Caki2 (cell line): ENCODE measurements at regions of chr15 and their contacts with region 1.

Region 1: GRCh38 chr15:49145651-49146609 is 9.5 kb downstream of the COPS2 start:
- DNase-seq: peak; percentile 25

Region 2: GRCh38 chr15:48810414-48811317 is 335.3 kb before region 1 on chr15 and contains the start of gene CEP152:
- in situ Hi-C with region 1: no loop called
- DNase-seq: peak; percentile 98
- total RNA-seq, gene CEP152: 2.2 and 5.2 TPM in 2 replicates

Region 3: GRCh38 chr15:48877630-48878595 is 268.0 kb before region 1 on chr15 and contains the start of gene EID1:
- in situ Hi-C with region 1: loop called (anchors 25 kb)
- DNase-seq: peak; percentile 91
- total RNA-seq, gene EID1: 165 and 200 TPM in 2 replicates

Region 4: GRCh38 chr15:49046220-49047102 is 99.5 kb before region 1 on chr15 and contains the start of gene SECISBP2L:
- in situ Hi-C with region 1: loop called (anchors 25 kb)
- DNase-seq: peak; percentile 96
- total RNA-seq, gene SECISBP2L: 4.3 and 51.0 TPM in 2 replicates

Region 5: DNA sequence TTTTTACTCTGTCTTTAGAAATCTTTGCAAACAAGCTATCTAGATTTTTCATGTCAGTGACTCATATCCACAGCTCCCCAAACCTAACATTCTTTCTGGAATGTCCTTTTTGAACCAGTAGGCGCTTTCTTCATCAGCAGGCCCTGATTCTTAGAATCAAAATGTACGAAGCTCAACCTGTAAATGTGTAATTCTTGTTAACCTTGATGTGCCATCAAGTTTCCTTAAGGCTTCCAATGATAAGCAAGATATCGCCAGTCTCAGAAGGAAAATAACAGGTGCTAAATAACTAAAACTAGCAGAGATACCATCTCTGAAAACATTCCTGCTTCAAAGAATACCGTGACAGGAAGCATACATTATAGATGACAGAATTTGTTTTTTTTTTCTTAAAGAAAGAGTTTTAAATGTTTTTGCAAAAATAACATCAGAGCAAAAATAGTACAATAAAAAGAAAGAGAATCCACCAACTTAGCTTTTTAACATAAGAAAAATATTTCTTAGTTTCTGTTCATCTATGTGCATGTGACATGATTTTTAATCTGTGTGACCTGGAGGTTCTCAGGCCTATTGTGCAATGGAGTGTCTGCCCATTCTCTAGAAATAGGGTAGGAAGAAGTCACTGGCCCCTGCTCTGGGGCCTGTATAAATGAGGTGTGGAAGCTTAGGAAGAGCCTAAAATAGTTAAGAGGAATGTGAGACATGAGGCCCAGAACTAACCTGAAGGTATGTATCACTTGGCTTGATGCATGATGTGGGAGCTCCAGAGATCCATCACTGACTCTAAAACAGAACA is 85.0 kb before region 1 on chr15:
- in situ Hi-C with region 1: no loop called
- DNase-seq: no peak

Region 6: GRCh38 chr15:49255966-49256759 is 110.2 kb after region 1 on chr15:
- in situ Hi-C with region 1: no loop called
- DNase-seq: no peak